MCF 10A (cell line): ENCODE measurements at regions of chr6 and their contacts with region 1.

Region 1: DNA sequence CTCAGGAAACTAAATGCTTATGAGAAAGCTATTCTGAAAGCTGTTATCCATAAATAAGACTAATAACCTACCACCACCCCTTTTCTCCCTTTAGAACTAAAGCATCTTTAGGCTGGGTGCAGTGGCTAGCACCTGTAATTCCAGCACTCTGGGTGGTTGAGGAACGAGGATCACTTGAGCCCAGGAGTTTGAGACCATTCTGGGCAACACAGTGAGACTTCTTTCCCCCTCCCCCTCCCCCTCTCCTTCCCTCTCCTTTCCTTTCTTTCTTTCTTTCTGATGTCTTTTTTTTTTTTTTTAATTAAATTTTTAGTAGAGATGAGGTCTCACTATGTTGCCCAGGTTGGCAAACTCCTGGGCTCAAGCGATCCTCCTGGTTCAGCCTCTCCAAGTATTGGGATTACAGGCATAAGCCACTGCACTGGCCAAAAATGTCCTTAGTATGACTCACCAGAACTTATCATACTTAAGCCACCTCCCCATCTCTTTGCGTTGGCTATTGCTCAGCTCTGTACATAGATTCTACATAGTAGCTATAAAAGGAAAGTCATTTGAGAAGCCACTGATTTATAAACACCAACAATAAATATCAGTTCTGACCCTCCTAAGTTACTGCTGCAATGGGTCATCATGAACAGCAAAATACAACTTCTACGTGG is 54.8 kb upstream of the SPDEF start:
- DNase-seq: peak; percentile 78
- H3K4me3 Mint-ChIP-seq: no peak overlapping the region
- H3K27ac Mint-ChIP-seq: peak overlapping the region; percentile 88
- H3K4me1 Mint-ChIP-seq: peaks cover 7% of the 10 kb centered on the region
- H3K27me3 Mint-ChIP-seq: no peaks in the 10 kb centered on the region
- CTCF ChIP-seq: no peak

Region 2: GRCh38 chr6:33843131-33844121 is 767.5 kb before region 1 on chr6:
- CTCF ChIA-PET with region 1: no interaction called
- POLR2A ChIA-PET with region 1: no interaction called
- intact Hi-C with region 1: no loop called
- DNase-seq: no peak
- H3K4me3 Mint-ChIP-seq: no peak overlapping the region
- H3K27ac Mint-ChIP-seq: no peak overlapping the region
- H3K4me1 Mint-ChIP-seq: peaks cover 19% of the 10 kb centered on the region
- H3K27me3 Mint-ChIP-seq: no peaks in the 10 kb centered on the region
- CTCF ChIP-seq: no peak

Region 3: GRCh38 chr6:34161857-34162515 is 449.0 kb before region 1 on chr6:
- CTCF ChIA-PET with region 1: interaction called, 18 read pairs
- POLR2A ChIA-PET with region 1: interaction called, 3 read pairs
- intact Hi-C with region 1: loop called (anchors 5 kb)
- DNase-seq: no peak
- H3K4me3 Mint-ChIP-seq: no peak overlapping the region
- H3K27ac Mint-ChIP-seq: no peak overlapping the region
- H3K4me1 Mint-ChIP-seq: no peaks in the 10 kb centered on the region
- H3K27me3 Mint-ChIP-seq: peaks cover 38% of the 10 kb centered on the region
- CTCF ChIP-seq: no peak

Region 4: GRCh38 chr6:34248727-34249551 is 362.0 kb before region 1 on chr6 and contains the start of gene SMIM29:
- CTCF ChIA-PET with region 1: interaction called, 18 read pairs
- POLR2A ChIA-PET with region 1: interaction called, 3 read pairs
- intact Hi-C with region 1: loop called (anchors 2 kb)
- DNase-seq: peak; percentile 95
- H3K4me3 Mint-ChIP-seq: peak within 1 kb of the TSS; percentile 84
- H3K27ac Mint-ChIP-seq: peak within 1 kb of the TSS; percentile 88
- H3K4me1 Mint-ChIP-seq: peaks cover 33% of the 10 kb centered on the region
- H3K27me3 Mint-ChIP-seq: no peaks in the 10 kb centered on the region
- CTCF ChIP-seq: peak; percentile 95
- total RNA-seq, gene SMIM29: 12.0 and 25.7 TPM in 2 replicates

Region 5: GRCh38 chr6:34459899-34460593 is 150.9 kb before region 1 on chr6:
- CTCF ChIA-PET with region 1: interaction called, 60 read pairs
- POLR2A ChIA-PET with region 1: interaction called, 6 read pairs
- intact Hi-C with region 1: loop called (anchors 1 kb)
- DNase-seq: peak; percentile 63
- H3K4me3 Mint-ChIP-seq: no peak overlapping the region
- H3K27ac Mint-ChIP-seq: no peak overlapping the region
- H3K4me1 Mint-ChIP-seq: peaks cover 6% of the 10 kb centered on the region
- H3K27me3 Mint-ChIP-seq: no peaks in the 10 kb centered on the region
- CTCF ChIP-seq: peak; percentile 73

Region 6: GRCh38 chr6:34595332-34596184 is 15.4 kb before region 1 on chr6:
- CTCF ChIA-PET with region 1: interaction called, 34 read pairs
- POLR2A ChIA-PET with region 1: interaction called, 11 read pairs
- intact Hi-C with region 1: no loop called
- DNase-seq: peak; percentile 54
- H3K4me3 Mint-ChIP-seq: no peak overlapping the region
- H3K27ac Mint-ChIP-seq: no peak overlapping the region
- H3K4me1 Mint-ChIP-seq: peaks cover 29% of the 10 kb centered on the region
- H3K27me3 Mint-ChIP-seq: no peaks in the 10 kb centered on the region
- CTCF ChIP-seq: no peak

Region 7: DNA sequence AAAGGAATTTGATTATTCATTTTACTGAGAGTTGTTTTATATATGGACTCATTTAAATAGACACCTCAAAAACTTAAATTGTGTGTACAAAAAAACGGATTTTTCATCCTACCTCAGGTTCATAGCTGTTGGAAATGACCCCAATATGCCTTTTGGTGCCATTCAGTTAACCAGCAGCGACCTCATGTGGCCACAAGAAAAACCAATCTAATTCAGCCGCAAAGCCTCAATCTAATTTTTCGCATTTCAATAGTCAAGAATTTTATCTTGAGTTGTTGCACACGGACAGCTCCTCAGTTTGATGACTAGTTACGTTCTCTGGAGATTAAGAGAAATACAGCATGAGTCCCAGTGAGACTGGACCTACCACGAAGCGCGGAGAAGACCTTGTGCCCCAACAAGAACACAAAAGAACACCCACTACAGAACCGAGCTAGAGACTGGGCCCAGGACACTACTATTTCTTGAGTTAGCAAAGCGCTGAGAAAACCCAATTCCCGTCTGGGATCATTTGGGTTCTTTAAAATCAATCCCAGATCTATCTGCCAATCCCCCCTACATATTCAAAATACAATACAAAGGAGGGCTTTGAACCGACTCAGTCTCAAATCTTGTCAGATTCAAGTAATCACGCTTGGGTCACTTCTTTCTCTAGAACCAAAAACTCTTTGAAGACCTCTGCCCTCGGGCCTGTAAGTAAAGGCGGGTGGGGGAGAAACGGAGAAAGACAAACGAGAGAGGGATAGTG is 529.1 kb after region 1 on chr6:
- CTCF ChIA-PET with region 1: no interaction called
- POLR2A ChIA-PET with region 1: no interaction called
- intact Hi-C with region 1: loop called (anchors 5 kb)
- DNase-seq: peak; percentile 70
- H3K4me3 Mint-ChIP-seq: no peak overlapping the region
- H3K27ac Mint-ChIP-seq: no peak overlapping the region
- H3K4me1 Mint-ChIP-seq: peaks cover 4% of the 10 kb centered on the region
- H3K27me3 Mint-ChIP-seq: no peaks in the 10 kb centered on the region
- CTCF ChIP-seq: peak; percentile 91